T47D (cell line): ENCODE measurements at regions of chr14 and their contacts with region 1.

Region 1: GRCh38 chr14:48876806-48877340 is 709.3 kb downstream of the RPS29 start:
- DNase-seq: no peak

Region 2: GRCh38 chr14:49019467-49020115 is 142.7 kb after region 1 on chr14:
- in situ Hi-C with region 1: loop called (anchors 5 kb)
- DNase-seq: no peak